ENCODE measurements at regions of chr2 and their contacts with region 1.

Region 1: DNA sequence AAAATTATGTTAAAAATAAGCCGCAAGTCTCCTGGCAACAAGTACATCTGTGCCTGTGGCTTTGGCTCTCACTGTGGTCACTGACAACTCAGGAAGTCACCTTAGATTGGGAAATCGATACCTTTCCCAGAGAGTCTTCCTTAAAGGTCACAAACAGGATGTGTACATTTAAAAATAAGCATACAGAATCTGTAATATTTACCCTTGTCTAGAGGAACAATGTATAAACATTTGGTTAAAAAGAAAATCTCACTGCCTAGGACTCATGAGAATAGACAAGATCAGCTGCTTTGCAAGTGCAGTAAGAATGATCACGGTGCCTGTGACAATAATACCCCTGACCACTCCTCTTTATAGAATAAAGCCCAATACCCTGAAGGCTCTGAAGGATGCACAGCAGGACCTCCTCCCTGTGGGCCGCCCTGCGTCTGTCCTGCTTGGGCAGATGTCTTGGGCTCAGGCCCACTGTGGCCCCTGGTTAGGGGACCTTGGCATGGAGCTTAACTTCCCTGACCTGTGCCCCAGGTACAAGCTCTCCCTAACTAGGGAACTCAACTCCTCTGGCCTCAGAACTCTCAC is 98.0 kb upstream of the MGAT4A start:
- DNase-seq: peak; percentile 88
- ATAC-seq: peak; percentile 83
- H3K4me3 ChIP-seq: no peak overlapping the region
- H3K27ac ChIP-seq: peak overlapping the region; percentile 69
- H3K4me1 ChIP-seq: peaks cover 23% of the 10 kb centered on the region
- H3K27me3 ChIP-seq: no peaks in the 10 kb centered on the region
- CTCF ChIP-seq: no peak

Region 2: DNA sequence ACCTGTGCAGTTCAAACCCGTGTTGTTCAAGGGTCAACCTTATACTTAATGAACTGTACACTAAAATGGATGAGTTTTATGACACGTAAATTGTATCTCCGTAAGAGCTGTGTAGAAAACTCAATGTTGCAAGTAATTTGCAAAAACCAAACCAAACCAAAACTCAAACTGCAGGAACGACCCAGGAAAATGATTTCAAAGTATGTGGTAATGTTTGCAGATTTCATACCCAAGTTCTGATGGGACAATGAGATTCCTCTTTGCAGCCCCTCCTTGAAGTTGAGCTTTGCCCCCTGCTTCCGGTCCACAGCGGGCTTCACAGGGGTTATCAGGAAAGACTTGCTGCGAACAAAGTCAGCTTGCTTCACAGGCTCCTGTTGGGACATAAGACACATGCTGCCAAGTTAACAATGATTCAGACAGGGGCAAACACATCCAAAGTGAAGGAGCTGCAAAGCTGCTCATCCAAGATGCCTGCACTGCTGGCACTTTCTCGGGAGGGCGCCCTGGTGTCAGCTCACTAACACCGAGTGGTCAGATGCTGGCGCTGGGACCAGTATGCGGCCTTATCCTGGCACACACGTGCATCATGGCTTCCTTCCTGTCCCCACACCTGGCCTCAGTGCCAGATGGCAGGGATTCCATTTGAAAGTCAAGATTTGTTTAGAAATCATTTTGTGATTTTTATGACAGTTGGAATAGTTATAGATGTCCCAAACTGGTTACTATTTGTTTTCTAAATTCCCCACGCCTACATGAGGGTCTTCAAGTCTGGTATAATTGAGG is 32.8 kb before region 1 on chr2:
- CTCF ChIA-PET with region 1: no interaction called
- POLR2A ChIA-PET with region 1: no interaction called
- intact Hi-C with region 1: loop called (anchors 2 kb)
- DNase-seq: no peak
- ATAC-seq: no peak
- H3K4me3 ChIP-seq: no peak overlapping the region
- H3K27ac ChIP-seq: no peak overlapping the region
- H3K4me1 ChIP-seq: peaks cover 24% of the 10 kb centered on the region
- H3K27me3 ChIP-seq: no peaks in the 10 kb centered on the region
- CTCF ChIP-seq: no peak

Region 3: DNA sequence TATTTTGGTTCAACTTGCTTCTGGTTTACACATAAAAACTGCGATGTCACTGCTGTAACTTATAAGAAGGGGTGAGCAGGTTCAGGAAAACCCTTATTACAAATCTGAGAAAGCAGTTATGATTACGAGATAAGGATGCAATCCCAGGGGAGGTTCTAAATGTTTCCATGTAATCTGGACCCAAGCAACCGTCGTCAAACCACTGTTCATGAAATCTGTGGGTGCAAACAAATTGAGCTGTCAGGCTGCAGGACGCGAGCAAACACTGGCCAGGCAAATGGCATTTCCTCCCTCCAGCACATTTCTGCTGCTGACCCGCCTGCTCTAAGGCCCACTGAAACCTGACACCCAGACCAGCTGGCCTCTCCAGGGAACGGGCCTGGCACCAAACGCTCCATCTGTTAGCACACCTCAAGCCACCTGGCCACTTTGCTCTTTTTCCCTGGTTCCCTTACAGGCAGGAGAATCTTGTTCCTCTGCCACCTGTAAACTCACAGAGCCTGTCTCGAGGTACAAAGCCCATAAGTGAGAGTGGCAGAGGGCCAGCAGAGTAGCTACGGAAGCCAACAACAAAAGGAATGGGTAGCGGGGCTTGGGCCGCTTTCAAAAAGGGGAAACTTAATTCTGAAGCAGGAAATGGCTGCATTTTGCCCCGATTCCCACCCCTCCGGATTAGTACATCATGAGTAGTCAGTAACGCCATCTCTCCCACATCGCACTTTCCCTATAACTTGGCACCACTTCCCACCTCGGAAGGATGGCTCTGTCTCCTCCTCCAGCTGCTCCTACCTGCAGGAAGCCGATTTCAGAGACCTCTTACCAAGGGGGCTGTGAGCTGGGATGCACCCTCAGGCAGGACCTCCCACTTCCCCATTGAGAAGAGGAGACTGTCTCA is 80.7 kb after region 1 on chr2:
- CTCF ChIA-PET with region 1: no interaction called
- POLR2A ChIA-PET with region 1: no interaction called
- intact Hi-C with region 1: no loop called
- DNase-seq: peak; percentile 87
- ATAC-seq: peak; percentile 67
- H3K4me3 ChIP-seq: peak overlapping the region; percentile 44; the same call in 1 of the 2 replicates
- H3K27ac ChIP-seq: peak overlapping the region; percentile 81
- H3K4me1 ChIP-seq: peaks cover 56% of the 10 kb centered on the region
- H3K27me3 ChIP-seq: no peaks in the 10 kb centered on the region
- CTCF ChIP-seq: no peak